Natural killer cell (primary cell): ENCODE measurements at regions of chr12 and their contacts with region 1.

Region 1: DNA sequence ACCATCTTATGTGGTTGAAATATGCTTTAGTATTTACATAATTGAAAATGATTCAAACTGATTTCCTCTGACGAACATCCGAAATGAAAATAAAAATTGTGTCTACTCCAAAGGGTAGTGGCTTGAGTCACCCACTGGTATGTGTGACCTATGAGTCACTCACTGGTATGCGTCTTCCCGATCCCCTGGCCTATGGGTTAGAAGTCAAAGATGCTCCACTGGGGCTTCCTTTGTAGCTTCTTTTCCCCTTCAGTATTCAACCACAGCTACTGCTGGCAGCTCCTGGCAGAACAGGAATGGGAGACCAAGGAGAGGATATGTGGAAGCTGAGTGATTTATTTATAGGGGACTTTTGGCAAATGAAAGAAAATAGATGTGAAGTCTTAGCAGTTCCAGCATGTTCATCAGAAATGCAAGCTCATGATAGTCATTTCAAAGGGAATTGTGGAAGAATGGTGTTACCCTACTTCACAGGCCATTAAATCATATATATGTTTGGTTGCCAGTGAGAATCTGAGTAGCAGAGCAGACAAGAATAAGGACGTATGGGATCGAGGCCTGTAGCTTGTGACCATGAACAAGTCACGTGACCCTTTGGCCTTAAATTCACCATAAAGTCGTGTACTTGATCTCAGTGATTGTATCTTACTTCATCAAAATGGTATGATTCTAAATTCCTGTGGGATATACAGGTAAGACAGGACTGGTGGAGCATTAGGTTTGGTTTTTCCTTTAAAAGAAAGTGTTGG is 108.3 kb downstream of the CRADD start:
- DNase-seq: peak in 1 of 2 donors; percentile 56
- ATAC-seq: peak; percentile 89 to 92 (median 92)
- H3K4me3 ChIP-seq: no peak overlapping the region
- H3K4me3 Mint-ChIP-seq: no peak overlapping the region
- H3K27ac ChIP-seq: no peak overlapping the region
- H3K27ac Mint-ChIP-seq: peak overlapping the region; percentile 76 to 85
- H3K4me1 ChIP-seq: peaks cover 17% of the 10 kb centered on the region
- H3K4me1 Mint-ChIP-seq: peaks cover 43 to 44% of the 10 kb centered on the region in 2 donors
- H3K27me3 ChIP-seq: no peaks in the 10 kb centered on the region
- H3K27me3 Mint-ChIP-seq: no peaks in the 10 kb centered on the region
- CTCF ChIP-seq: no peak

Region 2: DNA sequence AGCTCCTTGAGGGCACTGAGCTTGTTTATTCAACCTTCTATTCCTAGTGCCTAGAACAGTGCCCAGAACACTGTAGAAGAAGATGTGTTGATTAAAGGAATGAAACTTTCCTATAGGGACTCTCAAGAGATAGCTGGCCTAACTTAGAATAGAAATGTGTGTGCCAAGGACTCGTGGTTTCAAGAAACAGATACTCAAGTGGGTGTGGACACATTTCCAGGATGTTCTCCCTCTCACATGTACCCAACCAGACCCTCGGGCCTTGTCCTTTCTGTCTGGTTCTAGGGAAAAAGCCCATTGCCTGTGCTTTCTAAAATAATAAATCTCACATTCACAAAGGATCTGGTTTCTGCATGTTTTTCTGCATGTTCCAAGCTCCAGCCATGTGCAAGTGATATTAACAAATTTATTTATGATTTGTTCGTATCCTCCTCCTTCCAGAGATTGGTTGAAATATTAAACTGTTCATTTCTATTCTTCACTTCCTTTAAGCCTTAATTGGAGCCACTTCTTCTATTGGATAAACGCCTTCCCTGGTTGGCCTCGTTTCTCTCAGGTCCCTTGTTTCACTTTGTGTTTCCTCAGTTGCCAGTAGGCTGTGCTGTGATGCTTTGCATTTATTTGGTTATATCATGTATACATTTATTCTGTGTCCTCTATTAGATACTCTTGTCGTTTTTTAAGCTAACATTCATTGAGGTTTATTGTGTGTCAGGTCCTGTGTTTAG is 18.5 kb before region 1 on chr12:
- intact Hi-C with region 1: loop called (anchors 1 kb)
- DNase-seq: peak in 1 of 2 donors; percentile 67
- ATAC-seq: peak; percentile 71 to 84 (median 76)
- H3K4me3 ChIP-seq: no peak overlapping the region
- H3K4me3 Mint-ChIP-seq: peak overlapping the region; percentile 11
- H3K27ac ChIP-seq: peak overlapping the region; percentile 43
- H3K27ac Mint-ChIP-seq: peak overlapping the region; percentile 57 to 76
- H3K4me1 ChIP-seq: peaks cover 2% of the 10 kb centered on the region
- H3K4me1 Mint-ChIP-seq: peaks cover 29 to 38% of the 10 kb centered on the region in 2 donors
- H3K27me3 ChIP-seq: no peaks in the 10 kb centered on the region
- H3K27me3 Mint-ChIP-seq: no peaks in the 10 kb centered on the region
- CTCF ChIP-seq: peak; percentile 66